ENCODE measurements at regions of chr19 and their contacts with region 1.

Region 1: DNA sequence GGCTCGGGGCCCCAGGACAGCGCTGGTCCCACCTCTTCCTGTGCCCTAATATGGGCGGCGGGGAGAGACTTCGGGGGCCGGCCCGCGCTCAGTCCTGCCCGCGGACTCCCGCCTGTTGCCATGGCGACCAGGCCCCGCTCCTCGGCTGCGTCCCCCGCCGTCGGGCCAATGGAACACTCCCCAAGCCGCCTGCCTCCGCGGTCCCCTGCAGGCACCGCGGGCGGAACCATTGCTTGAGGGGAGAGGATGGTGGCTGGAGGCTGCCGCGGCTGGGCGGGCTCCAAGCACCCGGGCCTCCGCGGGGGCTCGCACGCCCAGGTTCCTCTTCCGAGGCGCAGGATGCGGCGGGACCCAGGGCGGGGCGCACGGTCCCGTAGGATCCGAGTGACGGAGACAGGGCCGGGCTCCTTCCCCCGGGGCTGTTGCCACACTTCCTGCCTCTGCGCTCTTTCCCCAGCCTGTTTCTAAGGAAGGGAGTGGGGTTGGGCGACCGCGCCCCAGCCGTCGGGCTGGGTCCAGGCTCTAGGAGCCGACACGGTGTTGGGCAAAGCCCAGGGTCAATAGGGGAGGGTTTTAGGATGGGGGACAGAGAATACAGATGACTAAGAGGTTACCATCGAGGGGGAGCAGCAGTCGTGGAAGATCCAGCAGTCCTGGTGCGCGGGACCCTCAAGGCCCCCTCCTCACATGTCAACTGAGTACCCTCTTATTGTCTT is 1.2 kb upstream of the JUNB start:
- DNase-seq: peak; percentile 98
- ATAC-seq: peak; percentile 51
- H3K4me3 Mint-ChIP-seq: peak overlapping the region; percentile 94
- H3K27ac Mint-ChIP-seq: peak overlapping the region; percentile 95
- H3K4me1 Mint-ChIP-seq: peaks cover 28% of the 10 kb centered on the region
- H3K27me3 Mint-ChIP-seq: no peaks in the 10 kb centered on the region

Region 2: DNA sequence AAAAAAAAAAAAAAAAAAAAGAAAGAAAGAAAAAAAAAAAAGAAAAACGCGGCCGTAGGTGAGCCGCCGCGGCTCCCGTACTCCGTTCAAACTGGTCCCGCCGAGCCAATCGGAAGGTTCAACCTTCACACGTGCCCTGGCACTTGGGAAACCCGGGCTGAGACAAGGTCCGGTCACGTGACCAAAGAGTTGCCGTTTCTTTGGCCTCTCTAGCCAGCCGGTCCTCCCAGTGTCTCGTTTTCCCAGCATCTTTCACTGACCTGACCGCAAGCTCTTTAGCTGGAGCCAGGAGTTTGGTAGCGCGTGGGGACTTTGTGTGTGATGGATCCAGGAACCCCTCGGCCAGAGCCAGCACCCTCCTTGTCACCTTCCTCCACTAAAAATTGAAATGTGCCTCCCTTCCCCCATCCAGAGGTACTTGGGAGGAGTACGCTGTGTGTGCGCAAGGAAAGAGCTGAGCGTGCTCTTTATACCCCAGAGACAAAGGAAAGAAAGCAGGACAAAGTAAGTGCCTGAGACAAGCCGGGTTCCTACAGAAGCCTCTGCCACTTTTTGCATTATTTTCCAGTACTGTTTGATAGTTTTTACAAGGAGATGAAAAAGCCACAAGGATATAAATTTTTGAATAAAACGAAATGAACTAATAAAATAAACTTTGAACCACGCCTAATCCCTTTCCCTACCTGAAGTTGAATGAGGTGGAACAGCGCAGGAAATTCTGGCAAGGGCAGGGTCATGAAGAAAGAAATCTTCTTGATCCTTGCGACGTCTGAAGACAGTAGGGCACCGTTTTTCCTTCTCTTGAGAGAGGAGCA is 67.3 kb before region 1 on chr19:
- POLR2A ChIA-PET with region 1: interaction called, 18 read pairs
- DNase-seq: peak; percentile 86
- ATAC-seq: peak; percentile 84
- H3K4me3 Mint-ChIP-seq: peak overlapping the region; percentile 89
- H3K27ac Mint-ChIP-seq: peak overlapping the region; percentile 86
- H3K4me1 Mint-ChIP-seq: peaks cover 18% of the 10 kb centered on the region
- H3K27me3 Mint-ChIP-seq: no peaks in the 10 kb centered on the region

Region 3: DNA sequence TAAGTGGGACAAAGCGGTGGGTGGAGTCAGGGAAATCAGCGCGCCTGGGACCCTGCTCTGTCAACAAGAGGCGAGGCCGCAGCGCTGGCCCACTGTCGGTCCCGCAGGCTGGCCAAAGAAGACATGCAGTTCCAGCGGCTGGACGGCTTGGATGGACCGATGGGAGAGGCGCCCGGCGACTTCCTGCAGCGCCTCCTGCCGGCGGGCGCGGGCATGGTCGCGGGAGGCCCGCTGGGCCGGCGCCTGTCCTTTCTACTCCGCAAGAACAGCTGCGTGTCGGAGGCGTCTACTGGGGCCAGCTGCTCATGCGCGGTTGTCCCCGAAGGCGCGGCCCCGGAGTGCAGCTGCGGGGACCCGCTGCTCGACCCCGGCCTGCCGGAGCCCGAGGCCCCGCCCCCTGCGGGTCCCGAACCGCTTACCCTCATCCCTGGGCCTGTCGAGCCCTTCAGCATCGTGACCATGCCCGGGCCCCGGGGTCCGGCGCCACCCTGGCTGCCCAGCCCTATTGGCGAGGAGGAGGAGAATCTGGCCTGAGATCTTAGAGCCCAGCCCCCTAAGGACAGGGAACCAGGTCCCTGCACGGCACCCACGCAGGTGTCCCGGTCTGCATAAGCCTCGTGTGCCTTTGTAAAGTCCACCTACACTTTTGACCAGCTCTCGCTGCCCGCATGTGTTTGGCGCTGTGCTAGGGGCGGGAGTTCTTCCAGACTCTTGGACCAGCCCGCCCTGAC is 32.4 kb before region 1 on chr19:
- POLR2A ChIA-PET with region 1: interaction called, 10 read pairs
- DNase-seq: peak; percentile 86
- ATAC-seq: peak; percentile 82
- H3K4me3 Mint-ChIP-seq: peak overlapping the region; percentile 59
- H3K27ac Mint-ChIP-seq: no peak overlapping the region
- H3K4me1 Mint-ChIP-seq: peaks cover 2% of the 10 kb centered on the region
- H3K27me3 Mint-ChIP-seq: peaks cover 9% of the 10 kb centered on the region

Region 4: DNA sequence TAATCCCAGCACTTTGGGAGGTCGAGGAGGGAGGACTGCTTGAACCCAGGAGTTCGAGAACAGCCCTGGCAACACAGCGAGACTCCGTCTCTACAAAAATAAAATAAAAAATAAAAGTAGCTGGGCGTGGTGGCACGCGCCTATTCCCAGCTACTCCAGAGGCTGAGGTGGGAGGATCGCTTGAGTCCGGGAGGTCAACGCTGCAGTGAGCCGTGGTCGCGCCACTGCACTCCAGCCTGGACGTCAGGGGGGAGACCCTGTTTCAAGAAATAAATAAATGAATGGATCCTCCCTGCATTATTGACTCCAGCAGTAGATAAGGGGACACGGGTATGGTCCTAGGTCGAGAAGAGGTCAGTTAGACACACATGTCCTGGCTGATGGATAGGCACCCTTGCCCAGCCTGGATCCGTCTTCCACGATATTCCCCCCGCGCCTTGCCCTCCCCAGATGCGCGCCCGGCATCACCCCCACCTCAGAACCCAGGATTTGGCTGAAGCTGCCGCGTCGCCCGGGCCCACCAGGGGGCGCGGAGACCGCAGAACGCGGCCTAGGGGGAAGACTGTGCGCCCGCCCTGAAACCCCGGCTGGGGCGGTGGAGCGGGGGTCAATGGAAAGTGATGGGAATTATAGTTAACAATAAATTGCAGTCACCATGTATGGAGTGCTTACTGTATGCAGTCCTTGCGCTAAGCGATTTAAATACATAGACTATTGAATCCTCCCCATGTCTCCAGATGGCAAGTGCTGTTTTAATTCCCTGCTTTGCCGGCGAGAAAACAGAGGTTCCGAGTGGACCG is 12.6 kb before region 1 on chr19:
- POLR2A ChIA-PET with region 1: interaction called, 361 read pairs
- DNase-seq: peak; percentile 92
- ATAC-seq: peak; percentile 32
- H3K4me3 Mint-ChIP-seq: peak overlapping the region; percentile 87
- H3K27ac Mint-ChIP-seq: peak overlapping the region; percentile 94
- H3K4me1 Mint-ChIP-seq: peaks cover 28% of the 10 kb centered on the region
- H3K27me3 Mint-ChIP-seq: no peaks in the 10 kb centered on the region

Region 5: DNA sequence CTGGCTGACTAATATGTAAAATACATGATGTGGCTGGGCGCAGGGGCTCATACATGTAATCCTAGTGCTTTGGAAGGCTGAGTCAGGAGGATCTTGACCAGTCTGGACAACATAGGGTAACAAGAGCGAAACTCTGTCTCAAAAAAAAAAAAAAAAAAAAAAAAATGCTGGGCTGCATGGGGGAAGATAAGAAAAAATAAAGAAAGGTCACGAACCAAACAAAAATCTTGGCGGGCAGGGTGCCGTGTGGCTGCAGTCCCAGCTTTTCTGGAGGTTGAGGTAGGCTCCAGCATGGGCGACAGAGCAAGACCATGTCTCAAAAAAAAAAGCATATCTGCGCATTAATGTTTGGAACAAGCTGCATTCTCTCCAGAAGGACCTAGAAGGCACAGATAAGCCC is 25.0 kb after region 1 on chr19:
- POLR2A ChIA-PET with region 1: no interaction called
- DNase-seq: no peak
- ATAC-seq: no peak
- H3K4me3 Mint-ChIP-seq: no peak overlapping the region
- H3K27ac Mint-ChIP-seq: no peak overlapping the region
- H3K4me1 Mint-ChIP-seq: peaks cover 2% of the 10 kb centered on the region
- H3K27me3 Mint-ChIP-seq: no peaks in the 10 kb centered on the region

Region 6: GRCh38 chr19:13117772-13118423 is 327.8 kb after region 1 on chr19 and contains the start of gene NACC1:
- POLR2A ChIA-PET with region 1: no interaction called
- DNase-seq: peak; percentile 97
- ATAC-seq: peak; percentile 87
- H3K4me3 Mint-ChIP-seq: peak within 1 kb of the TSS; percentile 92
- H3K27ac Mint-ChIP-seq: peak within 1 kb of the TSS; percentile 92
- H3K4me1 Mint-ChIP-seq: peaks cover 19% of the 10 kb centered on the region
- H3K27me3 Mint-ChIP-seq: no peaks in the 10 kb centered on the region
- total RNA-seq, gene NACC1: 56.3 to 57.2 TPM

Measured in activated naive CD8-positive, alpha-beta T cell treated with anti-CD3 and anti-CD28 coated beads, Interleukin-2, amount 10 ng/mL, durations not matched to agents 7 days and 5 days (primary cell).